ENCODE measurements at regions of chr1 and their contacts with region 1.

Region 1: GRCh38 chr1:173429471-173430402 is 47.4 kb upstream of the PRDX6 start:
- DNase-seq: peak; percentile 71
- H3K4me3 Mint-ChIP-seq: peak overlapping the region; percentile 36
- H3K27ac Mint-ChIP-seq: peak overlapping the region; percentile 84
- H3K4me1 Mint-ChIP-seq: peaks cover 29% of the 10 kb centered on the region
- H3K27me3 Mint-ChIP-seq: no peaks in the 10 kb centered on the region

Region 2: DNA sequence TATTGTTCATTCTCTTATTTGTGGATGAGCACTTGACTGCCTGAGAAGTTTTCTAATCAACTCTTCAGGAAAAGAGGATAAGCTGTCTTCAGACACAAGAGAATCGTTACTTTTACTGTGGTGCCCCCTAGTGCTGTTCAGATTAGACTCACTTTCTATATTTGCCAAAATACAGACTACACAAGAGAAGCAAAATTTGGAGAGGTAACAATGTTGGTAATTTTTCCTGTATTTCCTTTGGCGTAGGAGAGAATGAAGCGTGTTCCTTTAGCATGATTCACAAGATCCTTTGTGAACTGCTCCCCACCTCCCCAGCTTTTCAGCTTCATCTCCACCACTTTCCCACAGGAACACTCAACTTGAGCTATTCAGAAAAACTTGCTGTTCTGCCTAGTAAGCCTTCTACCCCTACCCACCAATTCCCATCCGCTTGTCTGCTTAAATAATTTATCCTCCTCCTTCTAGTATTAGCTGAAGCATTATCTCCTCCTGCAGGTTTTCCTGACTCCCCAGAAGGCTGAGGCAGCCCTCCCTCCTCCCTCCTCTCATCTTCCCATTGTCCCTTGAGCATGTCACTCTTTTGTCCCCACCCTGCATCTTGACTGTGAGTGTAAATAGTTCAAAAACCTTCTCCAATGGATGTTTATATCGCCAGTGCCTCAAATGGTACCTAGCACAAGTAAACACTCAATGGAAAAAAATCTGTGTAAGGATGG is 227.1 kb before region 1 on chr1:
- CTCF ChIA-PET with region 1: no interaction called
- POLR2A ChIA-PET with region 1: no interaction called
- DNase-seq: no peak
- H3K4me3 Mint-ChIP-seq: no peak overlapping the region
- H3K27ac Mint-ChIP-seq: no peak overlapping the region
- H3K4me1 Mint-ChIP-seq: peaks cover 30% of the 10 kb centered on the region
- H3K27me3 Mint-ChIP-seq: peaks cover 26% of the 10 kb centered on the region

Region 3: GRCh38 chr1:173476664-173477285 is 47.0 kb after region 1 on chr1:
- CTCF ChIA-PET with region 1: interaction called, 36 read pairs
- POLR2A ChIA-PET with region 1: interaction called, 34 read pairs
- DNase-seq: peak; percentile 85
- H3K4me3 Mint-ChIP-seq: peak overlapping the region; percentile 91
- H3K27ac Mint-ChIP-seq: peak overlapping the region; percentile 95
- H3K4me1 Mint-ChIP-seq: peaks cover 56% of the 10 kb centered on the region
- H3K27me3 Mint-ChIP-seq: no peaks in the 10 kb centered on the region

Region 4: GRCh38 chr1:173714759-173715537 is 285.2 kb after region 1 on chr1 and contains the start of gene KLHL20:
- CTCF ChIA-PET with region 1: interaction called, 17 read pairs
- POLR2A ChIA-PET with region 1: interaction called, 8 read pairs
- DNase-seq: peak; percentile 89
- H3K4me3 Mint-ChIP-seq: peak within 1 kb of the TSS; percentile 90
- H3K27ac Mint-ChIP-seq: peak within 1 kb of the TSS; percentile 97
- H3K4me1 Mint-ChIP-seq: peaks cover 24% of the 10 kb centered on the region
- H3K27me3 Mint-ChIP-seq: peaks cover 21% of the 10 kb centered on the region
- total RNA-seq, gene KLHL20: 17.7 to 18.9 TPM

Region 5: GRCh38 chr1:173862769-173863223 is 433.1 kb after region 1 on chr1:
- CTCF ChIA-PET with region 1: interaction called, 12 read pairs
- POLR2A ChIA-PET with region 1: interaction called, 5 read pairs
- DNase-seq: no peak
- H3K4me3 Mint-ChIP-seq: no peak overlapping the region
- H3K27ac Mint-ChIP-seq: peak overlapping the region; percentile 64
- H3K4me1 Mint-ChIP-seq: peaks cover 46% of the 10 kb centered on the region
- H3K27me3 Mint-ChIP-seq: no peaks in the 10 kb centered on the region

Region 6: GRCh38 chr1:174217787-174218574 is 788.2 kb after region 1 on chr1:
- CTCF ChIA-PET with region 1: interaction called, 16 read pairs
- POLR2A ChIA-PET with region 1: no interaction called
- DNase-seq: no peak
- H3K4me3 Mint-ChIP-seq: no peak overlapping the region
- H3K27ac Mint-ChIP-seq: no peak overlapping the region
- H3K4me1 Mint-ChIP-seq: peaks cover 2% of the 10 kb centered on the region
- H3K27me3 Mint-ChIP-seq: no peaks in the 10 kb centered on the region

Measured in activated CD4-positive, alpha-beta memory T cell treated with anti-CD3 and anti-CD28 coated beads, Interleukin-2, amount 10 ng/mL, durations not matched to agents 7 days and 5 days (primary cell).